Sigmoid colon (tissue), 7 donors: ENCODE measurements at regions of chr16 and their contacts with region 1.

Region 1: DNA sequence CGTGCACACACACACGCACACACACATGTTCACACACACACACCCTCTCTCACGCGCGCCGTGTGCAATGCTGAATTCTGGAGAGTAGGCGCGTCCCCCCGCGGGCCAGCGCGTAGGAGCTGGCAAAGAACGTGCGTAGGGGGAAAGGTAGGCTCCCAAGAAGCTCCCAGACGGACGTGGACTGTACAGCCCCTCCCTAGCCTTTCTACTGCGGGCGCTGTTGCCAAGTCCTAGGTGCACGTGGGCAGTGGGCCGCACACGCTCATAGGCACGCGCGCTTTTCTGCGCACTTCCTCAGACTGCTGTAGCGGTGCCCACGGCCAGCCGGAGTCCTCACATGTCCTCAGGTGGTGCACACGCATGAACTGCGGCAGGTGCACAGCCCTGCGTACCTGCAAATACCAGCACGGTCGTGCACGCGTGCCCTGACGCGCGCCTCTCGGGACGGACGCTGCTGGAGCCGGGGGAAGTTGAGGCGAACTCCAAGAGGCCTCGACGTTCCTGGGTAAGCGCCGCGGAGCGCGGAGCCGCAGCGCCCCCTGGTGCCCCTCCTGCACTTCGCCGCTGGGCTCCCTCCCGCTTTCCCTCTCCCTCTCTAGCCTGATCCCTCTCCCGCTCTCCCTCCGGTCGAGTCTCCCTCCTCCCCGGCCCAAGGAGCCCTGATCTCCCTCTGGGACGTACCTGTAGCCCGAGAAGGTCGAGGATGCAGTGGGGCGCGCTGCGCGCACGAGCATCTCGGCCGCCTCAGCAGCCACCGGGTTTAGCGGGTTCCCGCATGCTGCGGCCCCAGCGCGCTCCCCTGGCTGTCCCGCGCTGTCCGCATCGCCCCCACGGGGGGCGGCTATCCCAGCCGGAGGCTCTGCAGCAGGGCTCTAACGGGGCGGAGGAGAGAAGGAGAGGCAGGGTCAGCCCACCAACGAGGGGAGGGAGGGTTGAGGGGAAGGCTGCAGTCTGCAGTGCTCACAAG is 749 bp downstream of the GRIN2A start:
- DNase-seq: peak; percentile 75
- H3K4me3 ChIP-seq: peak overlapping the region in 3 of 4 donors; percentile 24 to 40 (median 33)
- H3K27ac ChIP-seq: no peak overlapping the region
- H3K4me1 ChIP-seq: peaks cover 0 to 32% (median 29%) of the 10 kb centered on the region in 4 donors
- H3K27me3 ChIP-seq: peaks cover 24 to 76% (median 32%) of the 10 kb centered on the region in 3 donors
- CTCF ChIP-seq: peak; percentile 69 to 95 (median 78)
- EP300 ChIP-seq: no peak
- POLR2A ChIP-seq: no peak

Region 2: GRCh38 chr16:9159839-9160550 is 1021.5 kb before region 1 on chr16:
- intact Hi-C with region 1: loop called (anchors 10 kb)
- DNase-seq: no peak
- H3K4me3 ChIP-seq: no peak overlapping the region
- H3K27ac ChIP-seq: no peak overlapping the region
- H3K4me1 ChIP-seq: peaks cover 0 to 6% (median 0%) of the 10 kb centered on the region in 4 donors
- H3K27me3 ChIP-seq: peaks cover 0 to 7% (median 0%) of the 10 kb centered on the region in 3 donors
- CTCF ChIP-seq: peak in 3 of 4 experiments; percentile 42 to 55 (median 53)
- EP300 ChIP-seq: no peak
- POLR2A ChIP-seq: no peak

Region 3: GRCh38 chr16:9297437-9298113 is 883.9 kb before region 1 on chr16:
- intact Hi-C with region 1: loop called (anchors 1 kb)
- DNase-seq: peak; percentile 72
- H3K4me3 ChIP-seq: no peak overlapping the region
- H3K27ac ChIP-seq: no peak overlapping the region
- H3K4me1 ChIP-seq: no peaks in the 10 kb centered on the region
- H3K27me3 ChIP-seq: no peaks in the 10 kb centered on the region
- CTCF ChIP-seq: peak; percentile 44 to 71 (median 60)
- EP300 ChIP-seq: no peak
- POLR2A ChIP-seq: no peak

Region 4: DNA sequence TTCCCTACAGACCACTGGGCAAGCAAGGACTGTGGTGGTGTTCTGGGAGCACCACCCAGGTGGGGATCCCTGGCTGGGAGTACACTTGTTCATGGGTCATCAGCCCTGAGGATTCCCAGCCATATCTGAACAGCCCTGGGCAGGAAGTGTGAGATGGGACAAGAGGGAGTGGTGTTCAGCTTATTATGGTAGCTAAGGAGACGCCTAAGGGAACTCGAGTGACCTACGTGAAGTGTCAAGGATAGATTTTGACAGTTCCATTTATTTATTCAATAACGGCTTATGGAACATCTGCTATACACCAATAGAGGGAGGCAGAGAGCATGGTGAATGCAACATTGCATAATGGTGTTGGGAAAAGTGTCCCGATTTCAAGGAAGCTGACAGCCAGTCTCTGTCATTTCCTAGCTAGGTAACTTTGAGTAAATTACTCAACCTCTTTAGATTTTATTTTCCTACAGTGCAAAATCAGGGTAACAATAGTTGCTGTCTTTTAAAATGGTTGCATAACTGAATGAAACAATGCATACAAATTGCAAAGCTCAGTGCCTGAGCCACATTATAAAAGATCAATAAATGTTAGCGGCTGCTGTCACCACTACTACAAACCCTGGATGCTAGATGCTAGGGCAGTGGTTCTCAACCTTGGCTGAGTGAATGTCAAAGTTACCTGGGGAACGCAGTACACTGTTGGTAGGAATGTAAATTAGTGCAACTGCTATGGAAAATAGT is 533.3 kb before region 1 on chr16:
- intact Hi-C with region 1: loop called (anchors 2 kb)
- DNase-seq: no peak
- H3K4me3 ChIP-seq: no peak overlapping the region
- H3K27ac ChIP-seq: no peak overlapping the region
- H3K4me1 ChIP-seq: no peaks in the 10 kb centered on the region
- H3K27me3 ChIP-seq: no peaks in the 10 kb centered on the region
- CTCF ChIP-seq: peak in 3 of 4 experiments; percentile 42 to 63 (median 58)
- EP300 ChIP-seq: no peak
- POLR2A ChIP-seq: no peak